Naive thymus-derived CD4-positive, alpha-beta T cell (primary cell): ENCODE measurements at regions of chr13 and their contacts with region 1.

Region 1: DNA sequence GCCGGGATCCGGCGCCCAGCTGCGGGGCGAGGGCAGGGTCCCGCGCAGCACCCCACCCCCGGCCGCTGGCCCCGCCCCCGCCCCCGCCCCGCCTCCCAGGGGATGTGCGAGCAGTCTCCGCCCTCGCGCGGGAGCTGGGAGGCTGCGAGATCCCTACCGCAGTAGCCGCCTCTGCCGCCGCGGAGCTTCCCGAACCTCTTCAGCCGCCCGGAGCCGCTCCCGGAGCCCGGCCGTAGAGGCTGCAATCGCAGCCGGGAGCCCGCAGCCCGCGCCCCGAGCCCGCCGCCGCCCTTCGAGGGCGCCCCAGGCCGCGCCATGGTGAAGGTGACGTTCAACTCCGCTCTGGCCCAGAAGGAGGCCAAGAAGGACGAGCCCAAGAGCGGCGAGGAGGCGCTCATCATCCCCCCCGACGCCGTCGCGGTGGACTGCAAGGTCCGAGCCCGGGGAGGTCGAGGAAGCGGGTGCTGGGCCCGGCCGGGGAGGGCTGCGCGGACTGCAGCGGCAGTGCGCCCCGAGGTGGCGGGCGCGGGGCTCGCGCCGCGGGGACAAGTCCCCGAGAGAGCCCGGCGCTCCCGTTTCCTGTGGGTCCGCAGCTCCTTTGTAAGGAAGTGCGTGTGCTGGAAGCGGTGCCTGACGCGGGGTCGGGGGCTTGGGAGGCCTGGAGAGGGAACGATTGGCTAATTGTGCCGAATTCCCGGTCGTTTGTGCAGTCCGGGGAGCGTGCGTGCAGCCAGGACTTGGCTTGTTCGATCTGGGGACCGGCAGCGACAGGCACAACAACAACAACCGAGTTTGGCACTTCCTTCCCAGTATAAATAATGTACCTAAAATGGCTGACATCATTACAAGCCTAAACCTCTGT is at the start of gene ITM2B:
- DNase-seq: peak; percentile 57 to 76 (median 70)
- ATAC-seq: peak; percentile 88
- H3K4me3 ChIP-seq: peak within 1 kb of the TSS; percentile 85
- H3K4me3 Mint-ChIP-seq: peak within 1 kb of the TSS; percentile 90 to 99 (median 97)
- H3K27ac ChIP-seq: peak within 1 kb of the TSS; percentile 94
- H3K27ac Mint-ChIP-seq: peak within 1 kb of the TSS; percentile 90 to 99 (median 98)
- H3K4me1 ChIP-seq: peaks cover 31 to 35% of the 10 kb centered on the region in 2 donors
- H3K4me1 Mint-ChIP-seq: peaks cover 32 to 63% (median 57%) of the 10 kb centered on the region in 7 donors
- H3K27me3 ChIP-seq: no peaks in the 10 kb centered on the region
- H3K27me3 Mint-ChIP-seq: peaks cover 0 to 31% (median 0%) of the 10 kb centered on the region in 5 donors
- total RNA-seq, gene ITM2B: 190 to 733 (median 412) TPM

Region 2: GRCh38 chr13:48094781-48095502 is 138.3 kb before region 1 on chr13 and contains the start of gene MED4:
- CTCF ChIA-PET with region 1: no interaction called
- POLR2A ChIA-PET with region 1: interaction called, 11 read pairs
- intact Hi-C with region 1: loop called (anchors 1 kb)
- DNase-seq: peak; percentile 94 to 99 (median 98)
- ATAC-seq: peak; percentile 100
- H3K4me3 ChIP-seq: peak within 1 kb of the TSS; percentile 90
- H3K4me3 Mint-ChIP-seq: peak within 1 kb of the TSS; percentile 94 to 99 (median 96)
- H3K27ac ChIP-seq: peak within 1 kb of the TSS; percentile 99
- H3K27ac Mint-ChIP-seq: peak within 1 kb of the TSS; percentile 92 to 98 (median 96)
- H3K4me1 ChIP-seq: peaks cover 13 to 26% of the 10 kb centered on the region in 2 donors
- H3K4me1 Mint-ChIP-seq: peaks cover 26 to 56% (median 48%) of the 10 kb centered on the region in 7 donors
- H3K27me3 ChIP-seq: no peaks in the 10 kb centered on the region
- H3K27me3 Mint-ChIP-seq: peaks cover 0 to 9% (median 0%) of the 10 kb centered on the region in 5 donors
- total RNA-seq, gene MED4: 43.4 to 60.9 (median 50.0) TPM

Region 3: GRCh38 chr13:48161530-48162179 is 71.6 kb before region 1 on chr13:
- CTCF ChIA-PET with region 1: interaction called, 16 read pairs
- POLR2A ChIA-PET with region 1: interaction called, 102 read pairs
- intact Hi-C with region 1: loop called (anchors 1 kb)
- DNase-seq: no peak
- ATAC-seq: peak; percentile 91
- H3K4me3 ChIP-seq: no peak overlapping the region
- H3K4me3 Mint-ChIP-seq: no peak overlapping the region
- H3K27ac ChIP-seq: no peak overlapping the region
- H3K27ac Mint-ChIP-seq: peak overlapping the region in 2 of 9 donors; percentile 26 to 99
- H3K4me1 ChIP-seq: peaks cover 2 to 13% of the 10 kb centered on the region in 2 donors
- H3K4me1 Mint-ChIP-seq: peaks cover 24 to 55% (median 40%) of the 10 kb centered on the region in 7 donors
- H3K27me3 ChIP-seq: no peaks in the 10 kb centered on the region
- H3K27me3 Mint-ChIP-seq: peaks cover 0 to 6% (median 0%) of the 10 kb centered on the region in 5 donors

Region 4: GRCh38 chr13:48222358-48223301 is 10.6 kb before region 1 on chr13:
- CTCF ChIA-PET with region 1: interaction called, 23 read pairs
- POLR2A ChIA-PET with region 1: interaction called, 128 read pairs
- intact Hi-C with region 1: loop called in 1 of 2 experiments (anchors 1 kb)
- DNase-seq: peak in 2 of 9 donors; percentile 25 to 30
- ATAC-seq: peak; percentile 58
- H3K4me3 ChIP-seq: peak overlapping the region; percentile 9
- H3K4me3 Mint-ChIP-seq: peak overlapping the region; percentile 48 to 91 (median 78)
- H3K27ac ChIP-seq: peak overlapping the region; percentile 83
- H3K27ac Mint-ChIP-seq: peak overlapping the region; percentile 38 to 99 (median 97)
- H3K4me1 ChIP-seq: peaks cover 40 to 60% of the 10 kb centered on the region in 2 donors
- H3K4me1 Mint-ChIP-seq: peaks cover 41 to 88% (median 74%) of the 10 kb centered on the region in 7 donors
- H3K27me3 ChIP-seq: no peaks in the 10 kb centered on the region
- H3K27me3 Mint-ChIP-seq: peaks cover 0 to 32% (median 0%) of the 10 kb centered on the region in 5 donors

Region 5: DNA sequence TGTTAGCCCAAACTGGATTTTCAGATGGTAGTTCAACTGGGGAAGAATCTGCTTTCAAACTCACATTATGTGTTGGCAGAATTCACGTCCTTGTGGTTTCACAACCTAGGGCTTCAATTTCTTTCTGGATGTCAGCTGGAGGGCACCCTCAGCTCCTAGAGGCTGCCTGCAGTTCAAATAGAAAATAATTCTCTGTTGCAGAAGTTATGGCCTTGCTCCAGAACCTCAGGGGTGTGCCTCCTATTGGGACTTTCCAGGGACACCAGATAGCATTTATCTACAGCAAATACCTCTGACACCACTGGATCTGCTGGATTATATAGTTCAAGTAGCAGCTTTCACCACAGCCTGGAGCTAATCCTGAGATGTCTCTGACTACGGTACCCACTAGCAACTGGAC is 58.5 kb after region 1 on chr13:
- CTCF ChIA-PET with region 1: no interaction called
- POLR2A ChIA-PET with region 1: no interaction called
- intact Hi-C with region 1: no loop called
- DNase-seq: no peak
- ATAC-seq: no peak
- H3K4me3 ChIP-seq: no peak overlapping the region
- H3K4me3 Mint-ChIP-seq: no peak overlapping the region
- H3K27ac ChIP-seq: no peak overlapping the region
- H3K27ac Mint-ChIP-seq: no peak overlapping the region
- H3K4me1 ChIP-seq: no peaks in the 10 kb centered on the region
- H3K4me1 Mint-ChIP-seq: no peaks in the 10 kb centered on the region
- H3K27me3 ChIP-seq: no peaks in the 10 kb centered on the region
- H3K27me3 Mint-ChIP-seq: peaks cover 8 to 27% (median 13%) of the 10 kb centered on the region in 5 donors

Region 6: GRCh38 chr13:48303359-48304142 is 70.3 kb after region 1 on chr13 and contains the start of gene RB1:
- CTCF ChIA-PET with region 1: interaction called, 3 read pairs
- POLR2A ChIA-PET with region 1: interaction called, 6 read pairs
- intact Hi-C with region 1: loop called (anchors 1 kb)
- DNase-seq: peak; percentile 85 to 92 (median 89)
- ATAC-seq: peak; percentile 92
- H3K4me3 ChIP-seq: peak within 1 kb of the TSS; percentile 85
- H3K4me3 Mint-ChIP-seq: peak within 1 kb of the TSS; percentile 76 to 99 (median 94)
- H3K27ac ChIP-seq: peak within 1 kb of the TSS; percentile 99
- H3K27ac Mint-ChIP-seq: peak within 1 kb of the TSS; percentile 93 to 98 (median 97)
- H3K4me1 ChIP-seq: peaks cover 10 to 15% of the 10 kb centered on the region in 2 donors
- H3K4me1 Mint-ChIP-seq: peaks cover 16 to 47% (median 40%) of the 10 kb centered on the region in 7 donors
- H3K27me3 ChIP-seq: no peaks in the 10 kb centered on the region
- H3K27me3 Mint-ChIP-seq: no peaks in the 10 kb centered on the region
- total RNA-seq, gene RB1: 18.0 to 37.1 (median 23.6) TPM

Region 7: GRCh38 chr13:48653472-48653939 is 420.2 kb after region 1 on chr13 and contains the start of gene CYSLTR2:
- CTCF ChIA-PET with region 1: no interaction called
- POLR2A ChIA-PET with region 1: no interaction called
- intact Hi-C with region 1: loop called in 1 of 2 experiments (anchors 1 kb)
- DNase-seq: peak in 7 of 9 donors; percentile 63 to 89 (median 81)
- ATAC-seq: peak; percentile 89
- H3K4me3 ChIP-seq: peak within 1 kb of the TSS; percentile 49
- H3K4me3 Mint-ChIP-seq: peak within 1 kb of the TSS; percentile 77 to 98 (median 86)
- H3K27ac ChIP-seq: peak within 1 kb of the TSS; percentile 82
- H3K27ac Mint-ChIP-seq: peak within 1 kb of the TSS; percentile 86 to 99 (median 94)
- H3K4me1 ChIP-seq: peaks cover 11 to 26% of the 10 kb centered on the region in 2 donors
- H3K4me1 Mint-ChIP-seq: peaks cover 22 to 65% (median 56%) of the 10 kb centered on the region in 7 donors
- H3K27me3 ChIP-seq: no peaks in the 10 kb centered on the region
- H3K27me3 Mint-ChIP-seq: peaks cover 0 to 2% (median 0%) of the 10 kb centered on the region in 5 donors
- total RNA-seq, gene CYSLTR2: 2.1 to 6.5 (median 3.5) TPM